HEK293 (cell line): ENCODE measurements at regions of chr6 and their contacts with region 1.

Region 1: GRCh38 chr6:105317607-105318533 is 85.0 kb downstream of the PREP start:
- H3K4me3 ChIP-seq: no peak overlapping the region
- H3K27ac ChIP-seq: no peak overlapping the region
- H3K4me1 ChIP-seq: no peaks in the 10 kb centered on the region
- CTCF ChIP-seq: 0 out of 2 replicates have a peak, but pooled peaks have one; percentile 11

Region 2: DNA sequence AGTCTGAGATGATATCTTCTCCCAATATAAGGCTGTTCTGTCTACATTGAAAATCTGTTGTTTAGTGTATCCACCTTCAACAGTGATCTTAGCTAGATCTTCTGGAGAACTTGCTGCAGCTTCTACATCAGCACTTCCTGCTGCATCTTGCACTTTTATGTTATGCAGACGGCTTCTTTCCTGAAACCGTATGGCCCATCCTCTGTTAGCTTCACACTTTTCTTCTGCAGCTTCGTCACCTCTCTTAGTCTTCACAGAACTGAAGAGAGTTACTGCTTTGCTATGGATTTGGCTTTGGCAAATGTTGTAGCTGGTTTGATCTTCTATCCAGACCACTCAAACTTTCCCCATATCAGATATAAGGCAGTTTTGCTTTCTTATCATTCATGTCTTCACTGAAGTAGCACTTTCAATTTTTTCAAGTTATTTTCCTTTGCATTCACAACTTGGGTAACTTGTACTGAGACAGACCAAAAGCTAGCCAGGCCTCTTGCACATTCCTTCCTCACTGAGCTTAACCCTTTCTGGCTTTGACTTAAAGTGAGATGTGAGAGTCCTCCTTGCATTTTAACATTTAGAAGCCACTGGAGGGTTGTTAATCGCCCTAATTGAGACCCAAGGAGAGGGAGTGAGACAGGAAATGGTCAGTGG is 25.1 kb before region 1 on chr6:
- CTCF ChIA-PET with region 1: interaction called, 10 read pairs
- POLR2A ChIA-PET with region 1: no interaction called
- H3K4me3 ChIP-seq: no peak overlapping the region
- H3K27ac ChIP-seq: no peak overlapping the region
- H3K4me1 ChIP-seq: peaks cover 8% of the 10 kb centered on the region; the same call in 1 of the 2 replicates
- CTCF ChIP-seq: no peak

Region 3: GRCh38 chr6:105363100-105363754 is 45.4 kb after region 1 on chr6:
- CTCF ChIA-PET with region 1: interaction called, 18 read pairs
- POLR2A ChIA-PET with region 1: no interaction called
- H3K4me3 ChIP-seq: no peak overlapping the region
- H3K27ac ChIP-seq: no peak overlapping the region
- H3K4me1 ChIP-seq: no peaks in the 10 kb centered on the region
- CTCF ChIP-seq: no peak